Transverse colon (tissue), 4 donors: ENCODE measurements at regions of chr15 and their contacts with region 1.

Region 1: GRCh38 chr15:50670115-50670514 is 16.5 kb downstream of the TRPM7 start:
- DNase-seq: no peak
- H3K4me3 ChIP-seq: no peak overlapping the region
- H3K27ac ChIP-seq: no peak overlapping the region
- H3K4me1 ChIP-seq: no peaks in the 10 kb centered on the region
- H3K27me3 ChIP-seq: no peaks in the 10 kb centered on the region
- CTCF ChIP-seq: no peak
- EP300 ChIP-seq: no peak
- POLR2A ChIP-seq: no peak

Region 2: DNA sequence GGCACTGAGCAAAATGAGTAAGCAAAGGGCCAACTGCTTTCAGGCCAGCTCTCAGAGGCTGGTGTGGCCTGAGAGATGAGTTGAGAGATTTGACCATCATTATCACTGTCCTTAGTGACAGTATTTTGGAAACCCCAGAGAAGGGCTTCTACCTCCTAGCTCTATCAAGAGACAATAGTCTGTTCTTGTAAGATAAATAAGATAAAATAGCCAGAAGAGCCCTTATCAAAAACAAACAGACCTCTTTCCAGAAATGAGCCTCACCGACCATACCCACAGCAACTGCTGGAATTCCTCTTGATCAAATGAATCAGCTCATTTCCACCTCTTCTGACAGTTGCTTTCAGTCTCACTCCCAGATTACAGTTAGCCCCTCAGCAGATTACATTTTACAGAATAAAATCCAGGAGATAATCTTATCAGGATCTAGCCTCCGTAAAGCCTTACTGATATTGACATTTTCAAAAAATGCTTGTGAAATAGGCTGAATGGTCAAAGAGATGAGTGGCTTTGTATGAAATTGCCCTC is 409.1 kb before region 1 on chr15:
- in situ Hi-C with region 1: no loop called
- intact Hi-C with region 1: no loop called
- DNase-seq: no peak
- H3K4me3 ChIP-seq: no peak overlapping the region
- H3K27ac ChIP-seq: no peak overlapping the region
- H3K4me1 ChIP-seq: no peaks in the 10 kb centered on the region
- H3K27me3 ChIP-seq: no peaks in the 10 kb centered on the region
- CTCF ChIP-seq: no peak
- EP300 ChIP-seq: no peak
- POLR2A ChIP-seq: no peak

Region 3: GRCh38 chr15:50594311-50594710 is 75.8 kb before region 1 on chr15:
- in situ Hi-C with region 1: no loop called
- intact Hi-C with region 1: no loop called
- DNase-seq: no peak
- H3K4me3 ChIP-seq: no peak overlapping the region
- H3K27ac ChIP-seq: no peak overlapping the region
- H3K4me1 ChIP-seq: no peaks in the 10 kb centered on the region
- H3K27me3 ChIP-seq: no peaks in the 10 kb centered on the region
- CTCF ChIP-seq: no peak
- EP300 ChIP-seq: no peak
- POLR2A ChIP-seq: no peak

Region 4: GRCh38 chr15:51024735-51025453 is 354.8 kb after region 1 on chr15:
- in situ Hi-C with region 1: no loop called
- intact Hi-C with region 1: loop called (anchors 5 kb)
- DNase-seq: no peak
- H3K4me3 ChIP-seq: no peak overlapping the region
- H3K27ac ChIP-seq: no peak overlapping the region
- H3K4me1 ChIP-seq: no peaks in the 10 kb centered on the region
- H3K27me3 ChIP-seq: no peaks in the 10 kb centered on the region
- CTCF ChIP-seq: no peak
- EP300 ChIP-seq: no peak
- POLR2A ChIP-seq: no peak